CD4-positive, alpha-beta T cell (primary cell): ENCODE measurements at regions of chr6 and their contacts with region 1.

Region 1: DNA sequence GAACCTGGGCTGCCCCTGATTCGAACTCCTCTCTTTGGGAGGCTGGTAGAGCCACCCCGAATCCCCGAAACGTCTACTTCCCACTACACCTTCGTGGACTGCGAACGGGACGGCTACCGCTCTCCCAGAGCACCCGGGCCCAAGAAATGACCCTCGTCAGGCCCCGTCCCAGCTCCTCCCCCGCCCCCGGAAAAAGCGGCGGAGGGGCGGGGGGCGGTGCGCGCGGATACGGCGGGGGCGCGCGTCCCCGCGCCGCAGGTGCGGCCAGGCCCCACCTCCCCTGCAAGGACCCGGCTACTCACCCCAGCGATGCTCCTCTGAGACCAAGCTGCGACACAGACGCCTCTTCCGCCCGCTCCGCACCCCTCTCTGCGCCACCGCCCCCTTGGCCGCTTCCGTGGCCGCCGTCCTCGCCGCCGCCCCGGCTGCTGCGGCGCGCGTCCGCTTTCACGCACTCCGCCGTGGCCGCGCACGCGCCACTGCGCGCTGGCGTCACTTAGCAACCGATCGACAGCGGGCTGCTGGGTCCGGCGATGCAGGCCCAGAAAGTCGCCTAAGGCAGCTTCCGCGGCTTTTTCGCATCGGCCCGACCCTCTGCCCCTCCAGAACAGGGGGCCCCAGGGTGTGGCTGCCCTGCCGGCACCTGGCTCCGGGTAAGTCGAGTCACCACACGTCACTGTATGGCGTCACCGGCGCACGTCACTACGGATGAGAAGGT is at the start of gene BTBD9:
- DNase-seq: peak; percentile 66 to 95 (median 80)
- ATAC-seq: peak; percentile 75
- H3K4me3 ChIP-seq: peak within 1 kb of the TSS; percentile 78
- H3K4me3 Mint-ChIP-seq: peak within 1 kb of the TSS; percentile 90
- H3K27ac ChIP-seq: peak within 1 kb of the TSS; percentile 94 to 99
- H3K27ac Mint-ChIP-seq: peak within 1 kb of the TSS; percentile 84
- H3K4me1 ChIP-seq: peaks cover 20% of the 10 kb centered on the region
- H3K4me1 Mint-ChIP-seq: peaks cover 52% of the 10 kb centered on the region
- H3K27me3 ChIP-seq: no peaks in the 10 kb centered on the region
- H3K27me3 Mint-ChIP-seq: no peaks in the 10 kb centered on the region
- CTCF ChIP-seq: no peak
- total RNA-seq, gene BTBD9: 58.7 to 59.3 TPM

Region 2: DNA sequence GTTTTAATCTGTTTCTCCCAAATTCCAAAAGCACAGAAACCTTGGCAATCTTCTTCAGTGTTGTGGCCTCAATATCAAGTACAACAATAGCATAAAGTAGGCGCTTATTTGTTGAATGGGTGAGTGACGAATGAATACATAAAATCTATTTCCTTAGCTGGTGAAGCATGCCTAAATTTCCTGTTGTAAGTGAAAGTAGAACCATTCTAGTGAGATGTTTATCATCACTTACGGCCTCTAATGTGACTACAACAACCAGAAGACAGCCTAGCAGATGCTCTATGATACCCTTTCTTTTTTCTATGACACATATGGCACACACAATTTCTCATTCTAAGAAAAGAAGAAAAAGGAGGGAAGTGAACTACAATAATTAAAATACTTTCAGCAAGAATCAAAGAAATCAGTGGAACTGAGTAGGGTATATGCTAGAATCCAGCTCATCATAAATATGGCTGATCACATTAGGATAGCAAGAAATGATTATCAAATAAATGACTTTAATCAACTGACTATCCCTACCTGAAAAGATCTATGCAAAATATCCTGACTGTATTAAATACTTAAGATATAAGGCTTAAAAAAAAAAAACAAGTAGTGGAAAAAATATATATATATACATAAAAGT is 67.4 kb before region 1 on chr6:
- CTCF ChIA-PET with region 1: no interaction called
- POLR2A ChIA-PET with region 1: interaction called, 11 read pairs
- intact Hi-C with region 1: loop called in 1 of 2 experiments (anchors 5 kb)
- DNase-seq: peak in 3 of 14 experiments; percentile 64 to 84 (median 67)
- ATAC-seq: peak; percentile 94
- H3K4me3 ChIP-seq: peak overlapping the region; percentile 4
- H3K4me3 Mint-ChIP-seq: peak overlapping the region; percentile 50
- H3K27ac ChIP-seq: peak overlapping the region; percentile 14 to 57
- H3K27ac Mint-ChIP-seq: peak overlapping the region; percentile 79
- H3K4me1 ChIP-seq: peaks cover 7% of the 10 kb centered on the region
- H3K4me1 Mint-ChIP-seq: peaks cover 25% of the 10 kb centered on the region
- H3K27me3 ChIP-seq: no peaks in the 10 kb centered on the region
- H3K27me3 Mint-ChIP-seq: no peaks in the 10 kb centered on the region
- CTCF ChIP-seq: no peak

Region 3: GRCh38 chr6:38579010-38579628 is 60.5 kb before region 1 on chr6:
- CTCF ChIA-PET with region 1: no interaction called
- POLR2A ChIA-PET with region 1: no interaction called
- intact Hi-C with region 1: loop called in 1 of 2 experiments (anchors 5 kb)
- DNase-seq: no peak
- ATAC-seq: no peak
- H3K4me3 ChIP-seq: no peak overlapping the region
- H3K4me3 Mint-ChIP-seq: no peak overlapping the region
- H3K27ac ChIP-seq: no peak overlapping the region
- H3K27ac Mint-ChIP-seq: no peak overlapping the region
- H3K4me1 ChIP-seq: no peaks in the 10 kb centered on the region
- H3K4me1 Mint-ChIP-seq: no peaks in the 10 kb centered on the region
- H3K27me3 ChIP-seq: no peaks in the 10 kb centered on the region
- H3K27me3 Mint-ChIP-seq: no peaks in the 10 kb centered on the region
- CTCF ChIP-seq: no peak

Region 4: GRCh38 chr6:38943964-38944363 is 304.3 kb after region 1 on chr6:
- CTCF ChIA-PET with region 1: no interaction called
- POLR2A ChIA-PET with region 1: no interaction called
- intact Hi-C with region 1: no loop called
- DNase-seq: no peak
- ATAC-seq: no peak
- H3K4me3 ChIP-seq: no peak overlapping the region
- H3K4me3 Mint-ChIP-seq: no peak overlapping the region
- H3K27ac ChIP-seq: no peak overlapping the region
- H3K27ac Mint-ChIP-seq: no peak overlapping the region
- H3K4me1 ChIP-seq: no peaks in the 10 kb centered on the region
- H3K4me1 Mint-ChIP-seq: no peaks in the 10 kb centered on the region
- H3K27me3 ChIP-seq: no peaks in the 10 kb centered on the region
- H3K27me3 Mint-ChIP-seq: no peaks in the 10 kb centered on the region
- CTCF ChIP-seq: no peak